Activated T-helper 1 cell treated with anti-CD3 and anti-CD28 coated beads, Interleukin-12 subunit alpha, Interleukin-12 subunit beta, Interleukin-2, Interleukin-4 antibody, amounts not matched to agents 30 ng/mL and 10 ng/mL and 1 ng/mL, durations not matched to agents 14 hours and 24 hours and 36 hours (primary cell): ENCODE measurements at regions of chr15 and their contacts with region 1.

Region 1: DNA sequence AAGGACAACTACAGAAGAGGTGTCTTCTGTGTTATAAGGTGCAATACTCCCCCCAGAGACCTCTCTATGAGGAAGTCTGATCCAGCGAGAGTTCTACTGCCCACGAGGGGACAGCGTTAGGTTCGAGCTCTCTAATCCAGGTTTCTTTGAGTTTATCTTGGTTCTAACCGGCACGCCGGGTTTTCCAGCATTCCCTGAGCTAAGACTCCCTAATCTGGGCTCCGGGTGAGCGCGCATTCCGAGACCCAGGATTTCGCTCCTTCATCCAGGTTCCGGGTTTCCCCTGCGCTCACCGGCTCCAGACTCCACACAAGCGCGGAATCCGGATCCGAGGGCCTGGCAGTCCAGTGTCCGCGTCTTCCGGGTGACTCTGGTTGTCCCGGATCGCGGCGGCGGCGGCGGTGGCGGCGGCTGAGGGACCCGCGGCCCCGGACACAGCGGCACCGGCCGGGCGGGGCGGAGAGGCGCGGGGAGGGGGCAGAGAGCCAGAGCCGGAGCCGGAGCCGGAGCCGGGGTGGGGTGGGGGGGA is at the start of gene ZNF609:
- DNase-seq: peak; percentile 86
- H3K4me3 Mint-ChIP-seq: peak within 1 kb of the TSS; percentile 88
- H3K27ac Mint-ChIP-seq: peak within 1 kb of the TSS; percentile 86
- H3K4me1 Mint-ChIP-seq: peaks cover 70% of the 10 kb centered on the region
- H3K27me3 Mint-ChIP-seq: peaks cover 1% of the 10 kb centered on the region
- total RNA-seq, gene ZNF609: 65.4 and 73.8 TPM in 2 replicates

Region 2: GRCh38 chr15:64247906-64248541 is 212.2 kb before region 1 on chr15:
- intact Hi-C with region 1: loop called (anchors 1 kb)
- DNase-seq: peak; percentile 27
- H3K4me3 Mint-ChIP-seq: peak overlapping the region; percentile 6
- H3K27ac Mint-ChIP-seq: peak overlapping the region; percentile 76
- H3K4me1 Mint-ChIP-seq: peaks cover 57% of the 10 kb centered on the region
- H3K27me3 Mint-ChIP-seq: peaks cover 2% of the 10 kb centered on the region

Region 3: GRCh38 chr15:64430000-64430735 is 30.1 kb before region 1 on chr15:
- intact Hi-C with region 1: loop called (anchors 1 kb)
- DNase-seq: peak; percentile 50
- H3K4me3 Mint-ChIP-seq: peak overlapping the region; percentile 72
- H3K27ac Mint-ChIP-seq: peak overlapping the region; percentile 89
- H3K4me1 Mint-ChIP-seq: peaks cover 31% of the 10 kb centered on the region
- H3K27me3 Mint-ChIP-seq: no peaks in the 10 kb centered on the region

Region 4: DNA sequence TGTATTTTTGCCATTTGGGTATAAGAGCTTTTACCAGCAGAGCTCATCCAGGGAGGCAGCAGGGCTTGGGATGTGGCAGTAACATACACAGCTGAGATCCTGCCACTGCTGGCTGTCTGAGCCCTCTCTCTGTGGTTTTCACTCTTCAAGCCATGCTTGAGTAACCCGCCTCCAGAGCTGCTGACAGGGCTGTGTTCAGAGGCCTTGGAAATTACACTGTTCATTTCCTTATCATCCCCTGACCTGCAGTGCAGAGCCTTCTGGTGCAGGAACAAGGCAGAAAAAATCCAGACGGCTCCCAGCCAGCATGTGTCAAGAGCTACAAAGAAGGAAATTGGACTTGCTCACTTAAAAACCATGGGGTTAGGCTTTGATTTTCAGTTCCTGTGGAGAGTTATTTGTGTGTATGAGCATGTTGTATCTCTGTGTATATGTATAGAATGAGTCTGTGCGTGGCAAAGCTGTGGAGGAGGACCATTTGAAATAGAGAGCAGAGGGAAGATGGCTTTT is 47.1 kb after region 1 on chr15:
- intact Hi-C with region 1: loop called (anchors 5 kb)
- DNase-seq: peak; percentile 16
- H3K4me3 Mint-ChIP-seq: no peak overlapping the region
- H3K27ac Mint-ChIP-seq: peak overlapping the region; percentile 36
- H3K4me1 Mint-ChIP-seq: peaks cover 48% of the 10 kb centered on the region
- H3K27me3 Mint-ChIP-seq: no peaks in the 10 kb centered on the region

Region 5: GRCh38 chr15:64552281-64552948 is 92.1 kb after region 1 on chr15:
- intact Hi-C with region 1: no loop called
- DNase-seq: no peak
- H3K4me3 Mint-ChIP-seq: no peak overlapping the region
- H3K27ac Mint-ChIP-seq: no peak overlapping the region
- H3K4me1 Mint-ChIP-seq: peaks cover 4% of the 10 kb centered on the region
- H3K27me3 Mint-ChIP-seq: no peaks in the 10 kb centered on the region

Region 6: DNA sequence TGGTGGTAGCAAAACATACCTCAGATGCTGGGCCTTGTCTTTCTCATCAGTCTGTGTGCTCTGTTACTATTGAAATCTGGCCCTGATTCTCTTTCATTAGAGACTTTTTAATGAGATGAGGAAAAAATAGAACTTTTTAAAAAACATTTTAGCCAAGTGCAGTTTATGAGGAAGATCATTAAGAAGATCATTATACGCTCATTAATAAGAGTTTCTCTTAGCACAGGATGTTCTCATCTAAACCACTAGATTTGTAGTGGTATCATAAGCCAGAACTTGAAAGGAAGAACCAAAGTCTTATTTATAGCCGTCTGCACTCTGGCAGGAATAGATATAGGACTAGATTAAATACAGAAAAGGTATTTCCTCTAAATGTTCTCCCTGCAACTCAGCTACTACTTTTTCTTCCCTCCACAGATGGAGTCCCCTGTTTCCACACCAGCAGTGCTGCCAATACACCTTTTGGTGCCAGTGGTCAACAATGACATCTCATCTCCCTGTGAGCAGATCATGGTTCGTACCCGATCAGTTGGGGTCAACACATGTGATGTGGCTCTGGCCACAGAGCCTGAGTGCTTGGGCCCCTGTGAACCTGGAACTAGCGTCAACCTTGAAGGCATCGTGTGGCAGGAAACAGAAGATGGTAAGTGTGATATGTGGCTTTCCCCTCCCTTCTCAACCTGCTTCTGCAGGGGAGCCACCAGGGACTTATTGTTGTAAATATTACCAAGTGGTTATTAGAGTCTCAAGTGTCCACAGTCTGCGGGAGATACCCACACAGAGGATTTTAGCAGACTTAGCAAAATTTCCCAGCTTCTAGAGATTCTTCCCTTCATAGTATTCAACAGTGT is 162.4 kb after region 1 on chr15:
- intact Hi-C with region 1: loop called (anchors 5 kb)
- DNase-seq: peak; percentile 48
- H3K4me3 Mint-ChIP-seq: peak overlapping the region; percentile 53
- H3K27ac Mint-ChIP-seq: peak overlapping the region; percentile 80
- H3K4me1 Mint-ChIP-seq: peaks cover 76% of the 10 kb centered on the region
- H3K27me3 Mint-ChIP-seq: no peaks in the 10 kb centered on the region

Region 7: DNA sequence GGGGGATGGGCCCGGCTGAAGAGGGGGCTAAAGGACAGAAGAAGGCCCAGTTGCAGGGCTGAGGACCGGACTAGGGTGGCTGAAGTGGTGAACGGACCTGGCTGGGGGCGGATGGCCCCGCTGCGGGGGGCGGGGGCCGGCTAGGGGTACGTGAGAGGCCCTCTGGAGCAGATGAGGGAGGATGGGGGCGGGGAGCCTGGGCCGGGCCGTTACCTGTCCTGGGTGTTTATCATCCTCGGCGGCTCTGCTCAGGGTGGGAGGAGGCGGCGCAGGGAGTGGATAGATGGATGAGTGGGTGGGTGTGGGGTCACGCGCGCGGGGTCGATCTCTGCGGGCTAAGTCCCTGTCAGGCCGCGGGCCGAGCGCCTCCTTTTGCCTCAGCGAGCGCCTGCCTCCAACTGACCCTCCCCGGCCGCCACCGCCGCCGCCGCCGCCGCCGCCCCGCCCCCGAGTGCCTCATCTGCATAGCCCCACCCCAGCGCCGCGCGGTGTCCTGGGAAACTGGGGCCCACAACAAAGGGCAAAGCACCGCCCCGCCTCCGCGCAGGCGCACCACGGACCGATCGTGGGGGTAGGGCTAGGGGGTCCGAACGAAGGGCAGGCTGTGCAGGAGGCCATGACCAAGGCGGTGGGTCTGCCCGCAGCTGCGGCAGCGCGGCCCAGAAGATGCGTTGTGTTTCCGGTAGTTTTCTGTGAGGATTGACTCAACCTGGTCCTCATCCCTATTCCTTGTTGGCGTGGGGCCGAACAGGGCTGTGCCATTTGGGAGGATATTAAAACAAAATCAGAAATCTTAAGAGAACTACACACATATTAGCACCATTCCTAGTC is 242.8 kb after region 1 on chr15:
- intact Hi-C with region 1: loop called (anchors 1 kb)
- DNase-seq: peak; percentile 93
- H3K4me3 Mint-ChIP-seq: peak overlapping the region; percentile 82
- H3K27ac Mint-ChIP-seq: peak overlapping the region; percentile 78
- H3K4me1 Mint-ChIP-seq: peaks cover 51% of the 10 kb centered on the region
- H3K27me3 Mint-ChIP-seq: peaks cover under 1% of the 10 kb centered on the region

Region 8: DNA sequence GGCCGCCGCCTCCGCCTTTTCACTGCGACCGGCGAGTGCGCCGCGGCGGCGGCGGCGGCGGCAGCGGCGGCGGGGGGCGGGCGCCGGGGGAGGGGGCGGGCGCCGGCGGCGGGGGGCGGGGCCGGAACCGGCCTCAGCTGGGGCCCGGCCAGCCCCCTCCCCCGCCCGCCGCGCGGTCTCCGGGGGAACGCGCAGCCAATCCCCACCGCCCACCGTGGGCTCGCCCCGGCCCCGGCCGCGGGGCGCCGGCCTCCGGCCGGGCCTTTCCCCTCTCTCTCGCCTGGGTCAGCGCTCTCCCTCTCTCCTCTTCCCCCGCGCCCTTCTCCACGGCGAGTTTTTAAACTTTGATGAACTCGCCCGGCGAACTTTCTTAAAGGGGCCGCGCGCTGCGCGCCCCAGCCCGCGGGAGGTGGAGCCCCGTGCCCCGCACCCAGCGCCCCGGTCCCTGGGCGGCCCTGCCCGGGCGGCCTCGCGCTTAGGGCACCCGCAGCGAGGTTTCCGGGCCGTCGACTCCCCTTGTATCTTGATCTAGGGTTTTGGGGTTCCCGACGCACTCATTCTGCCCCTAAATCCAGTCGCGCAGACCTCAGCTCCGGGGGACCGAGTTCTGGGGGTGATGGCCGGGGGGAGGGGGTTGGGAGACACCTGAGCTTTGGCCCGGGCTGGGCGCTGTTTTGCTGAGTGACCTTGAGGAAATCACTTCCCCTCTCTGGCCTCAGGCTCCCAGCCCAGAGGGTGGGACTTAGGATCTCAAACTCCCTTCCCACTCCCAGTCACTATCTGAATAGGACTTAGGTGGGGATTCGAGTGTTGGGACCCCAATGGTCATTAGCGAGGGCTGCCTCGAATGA is 315.5 kb after region 1 on chr15 and contains the start of gene RBPMS2:
- intact Hi-C with region 1: no loop called
- DNase-seq: no peak
- H3K4me3 Mint-ChIP-seq: peak within 1 kb of the TSS; percentile 78
- H3K27ac Mint-ChIP-seq: no peak within 1 kb of the TSS
- H3K4me1 Mint-ChIP-seq: no peaks in the 10 kb centered on the region
- H3K27me3 Mint-ChIP-seq: peaks cover 65% of the 10 kb centered on the region
- total RNA-seq, gene RBPMS2: 0.10 TPM in 1 of 2 replicates, not detected in the other